Activated CD4-positive, alpha-beta memory T cell treated with anti-CD3 and anti-CD28 coated beads for 36 hours (primary cell): ENCODE measurements at regions of chr4 and their contacts with region 1.

Region 1: DNA sequence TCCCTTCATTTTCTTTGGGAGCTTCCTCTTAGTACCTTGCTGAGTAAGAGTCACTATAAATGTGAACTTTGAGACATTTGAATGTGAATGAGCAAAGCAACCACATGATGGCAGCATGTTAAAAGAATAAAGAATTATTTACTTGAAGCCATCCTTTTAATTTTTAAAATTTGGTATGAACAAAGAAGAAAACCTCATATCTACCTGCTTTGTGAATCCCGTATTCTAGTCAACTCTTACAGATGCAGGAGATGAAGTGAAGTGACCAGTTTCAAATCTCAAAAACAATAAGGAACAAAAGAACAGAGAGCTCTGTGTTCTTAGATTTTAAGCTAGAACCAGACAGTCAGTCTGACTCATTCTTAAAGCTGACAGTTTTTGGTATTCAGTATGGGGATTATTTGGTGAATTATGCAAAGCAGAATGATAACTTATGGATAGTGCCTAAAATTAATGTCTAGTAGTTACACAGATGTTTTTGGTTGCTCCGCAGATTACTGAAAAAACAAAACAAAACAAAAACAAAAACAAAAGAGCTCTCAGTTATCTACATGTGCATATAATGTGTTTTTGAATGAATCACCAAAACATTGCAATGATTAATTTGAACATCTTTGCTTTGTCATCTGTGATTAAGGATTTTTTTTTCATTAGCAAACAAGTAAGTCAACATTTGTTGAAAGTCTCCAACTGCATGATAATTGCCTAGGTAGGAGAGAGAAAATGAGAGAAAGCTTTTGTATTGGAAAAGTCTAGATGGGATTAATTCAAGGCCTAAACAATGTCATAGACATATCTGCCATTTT is 48.2 kb upstream of the H2AZ1 start:
- DNase-seq: no peak
- H3K4me3 Mint-ChIP-seq: no peak overlapping the region
- H3K27ac Mint-ChIP-seq: no peak overlapping the region
- H3K4me1 Mint-ChIP-seq: peaks cover 5% of the 10 kb centered on the region
- H3K27me3 Mint-ChIP-seq: peaks cover 2% of the 10 kb centered on the region

Region 2: GRCh38 chr4:99875072-99875471 is 123.2 kb before region 1 on chr4:
- CTCF ChIA-PET with region 1: no interaction called
- POLR2A ChIA-PET with region 1: no interaction called
- intact Hi-C with region 1: no loop called
- DNase-seq: no peak
- H3K4me3 Mint-ChIP-seq: no peak overlapping the region
- H3K27ac Mint-ChIP-seq: no peak overlapping the region
- H3K4me1 Mint-ChIP-seq: peaks cover 13% of the 10 kb centered on the region
- H3K27me3 Mint-ChIP-seq: no peaks in the 10 kb centered on the region

Region 3: GRCh38 chr4:100017637-100018310 is 19.5 kb after region 1 on chr4:
- CTCF ChIA-PET with region 1: no interaction called
- POLR2A ChIA-PET with region 1: no interaction called
- intact Hi-C with region 1: no loop called
- DNase-seq: no peak
- H3K4me3 Mint-ChIP-seq: no peak overlapping the region
- H3K27ac Mint-ChIP-seq: no peak overlapping the region
- H3K4me1 Mint-ChIP-seq: peaks cover 10% of the 10 kb centered on the region
- H3K27me3 Mint-ChIP-seq: peaks cover 8% of the 10 kb centered on the region

Region 4: GRCh38 chr4:100082852-100083251 is 84.6 kb after region 1 on chr4:
- CTCF ChIA-PET with region 1: interaction called, 3 read pairs
- POLR2A ChIA-PET with region 1: no interaction called
- intact Hi-C with region 1: loop called (anchors 5 kb)
- DNase-seq: no peak
- H3K4me3 Mint-ChIP-seq: no peak overlapping the region
- H3K27ac Mint-ChIP-seq: peak overlapping the region; percentile 64
- H3K4me1 Mint-ChIP-seq: peaks cover 37% of the 10 kb centered on the region
- H3K27me3 Mint-ChIP-seq: peaks cover 7% of the 10 kb centered on the region